HEK293 (cell line): ENCODE measurements at regions of chr6 and their contacts with region 1.

Region 1: GRCh38 chr6:7541175-7542064 is at the start of gene DSP:
- H3K4me3 ChIP-seq: peak within 1 kb of the TSS; percentile 74
- H3K27ac ChIP-seq: peak within 1 kb of the TSS; percentile 96
- H3K4me1 ChIP-seq: peaks cover 42% of the 10 kb centered on the region
- CTCF ChIP-seq: peak; percentile 77

Region 2: DNA sequence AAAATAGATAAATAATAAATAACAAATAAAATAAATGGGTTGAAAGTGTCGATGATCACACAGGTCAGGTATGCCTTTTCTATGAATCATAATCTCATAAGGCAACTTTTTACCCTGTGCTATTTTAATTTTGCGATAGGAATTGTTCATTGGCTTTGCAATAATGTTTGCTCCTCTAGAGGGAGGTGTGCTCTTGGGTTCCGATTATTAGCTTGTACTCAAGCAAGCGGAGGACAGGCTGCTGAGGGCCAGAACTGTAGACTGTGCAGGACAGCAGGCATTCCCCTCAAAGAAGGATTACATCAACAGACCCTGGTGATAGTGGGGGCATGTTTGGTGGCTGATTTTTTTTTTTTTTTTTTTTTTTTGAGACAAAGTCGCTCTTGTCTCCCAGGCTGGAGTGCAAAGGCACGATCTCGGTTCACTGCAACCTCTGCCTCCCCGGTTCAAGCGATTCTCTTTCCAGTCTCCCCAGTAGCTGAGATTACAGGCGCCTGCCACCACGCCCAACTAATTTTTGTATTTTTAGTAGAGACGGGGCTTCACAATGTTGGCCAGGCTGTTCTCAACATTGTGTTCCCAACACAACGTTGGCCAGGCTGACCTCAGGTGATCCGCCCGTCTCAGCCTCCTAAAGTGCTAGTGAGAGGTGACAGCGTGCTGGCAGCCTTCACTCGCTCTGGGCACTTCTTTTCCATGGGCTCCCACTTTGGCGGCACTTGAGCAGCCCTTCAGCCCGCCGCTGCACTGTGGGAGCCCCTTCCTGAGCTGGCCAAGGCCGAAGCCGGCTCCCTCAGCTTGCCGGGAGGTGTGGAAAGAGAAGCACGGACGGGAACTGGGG is 116.2 kb before region 1 on chr6:
- CTCF ChIA-PET with region 1: interaction called, 6 read pairs
- POLR2A ChIA-PET with region 1: interaction called, 13 read pairs
- H3K4me3 ChIP-seq: no peak overlapping the region
- H3K27ac ChIP-seq: no peak overlapping the region
- H3K4me1 ChIP-seq: no peaks in the 10 kb centered on the region
- CTCF ChIP-seq: 0 out of 2 replicates have a peak, but pooled peaks have one; percentile 17

Region 3: DNA sequence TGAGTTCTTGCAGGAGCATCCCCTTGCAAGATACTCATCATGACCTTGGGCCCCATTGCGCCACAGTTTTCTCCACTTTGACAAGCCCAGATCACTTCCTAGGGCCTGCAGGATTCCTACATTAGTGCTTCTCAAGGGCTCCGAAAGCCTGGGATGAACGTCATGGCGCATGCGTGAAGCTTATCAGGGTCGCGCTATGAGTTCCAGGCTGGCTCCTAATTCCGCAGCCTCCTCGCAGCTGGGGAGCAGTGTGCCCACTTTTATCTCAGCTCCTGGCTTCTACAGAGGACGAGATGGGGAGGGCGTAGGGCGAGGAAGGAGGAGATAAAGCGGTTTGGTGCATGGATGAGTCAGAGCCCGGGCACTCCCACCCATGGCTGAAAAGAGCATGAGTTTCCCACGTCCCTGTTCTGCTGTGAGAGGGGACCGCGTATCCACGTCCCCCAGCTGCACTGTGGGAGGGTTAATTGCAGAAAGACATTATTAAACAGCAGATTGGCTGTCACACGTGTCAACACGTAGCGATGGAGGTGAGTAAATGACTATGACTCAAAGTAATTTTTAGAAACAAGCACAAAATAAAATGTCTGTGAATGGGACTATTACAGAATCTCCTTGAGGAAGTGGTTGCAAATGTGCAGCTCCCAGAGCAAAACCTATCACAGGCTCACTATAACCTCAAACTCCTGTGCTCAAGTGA is 72.9 kb before region 1 on chr6:
- CTCF ChIA-PET with region 1: interaction called, 8 read pairs
- POLR2A ChIA-PET with region 1: interaction called, 11 read pairs
- H3K4me3 ChIP-seq: peak overlapping the region; percentile 0; the same call in 1 of the 2 replicates
- H3K27ac ChIP-seq: no peak overlapping the region; the same call in 1 of the 2 replicates
- H3K4me1 ChIP-seq: no peaks in the 10 kb centered on the region; the same call in 1 of the 2 replicates
- CTCF ChIP-seq: no peak

Region 4: DNA sequence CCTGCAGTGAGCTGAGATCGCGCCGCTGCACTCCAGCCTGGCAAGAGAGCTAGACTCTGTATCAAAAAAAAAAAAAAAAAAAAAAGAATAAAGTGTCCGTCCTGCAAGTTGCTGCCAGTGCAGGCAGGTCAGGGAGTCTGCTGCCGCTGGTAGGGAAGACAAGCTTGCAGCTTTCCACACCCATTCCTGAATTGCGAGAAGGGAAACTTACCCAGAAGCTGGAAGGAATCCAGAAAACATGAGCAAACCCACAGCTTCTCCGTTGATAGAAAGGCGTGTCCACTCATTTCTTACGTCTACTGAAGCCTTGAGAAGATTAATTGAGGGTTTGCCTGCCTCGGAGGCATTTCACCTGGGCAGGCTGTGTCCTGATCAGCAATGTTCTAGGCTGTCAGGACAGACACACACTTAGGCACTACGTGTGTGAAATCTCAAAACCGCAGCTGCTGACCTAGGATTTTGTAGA is 61.6 kb before region 1 on chr6:
- CTCF ChIA-PET with region 1: no interaction called
- POLR2A ChIA-PET with region 1: interaction called, 35 read pairs
- H3K4me3 ChIP-seq: no peak overlapping the region
- H3K27ac ChIP-seq: no peak overlapping the region
- H3K4me1 ChIP-seq: no peaks in the 10 kb centered on the region; the same call in 1 of the 2 replicates
- CTCF ChIP-seq: no peak

Region 5: GRCh38 chr6:7505187-7505811 is 36.1 kb before region 1 on chr6:
- CTCF ChIA-PET with region 1: no interaction called
- POLR2A ChIA-PET with region 1: interaction called, 19 read pairs
- H3K4me3 ChIP-seq: no peak overlapping the region
- H3K27ac ChIP-seq: peak overlapping the region; percentile 40
- H3K4me1 ChIP-seq: peaks cover 11% of the 10 kb centered on the region; the same call in 1 of the 2 replicates
- CTCF ChIP-seq: no peak

Region 6: DNA sequence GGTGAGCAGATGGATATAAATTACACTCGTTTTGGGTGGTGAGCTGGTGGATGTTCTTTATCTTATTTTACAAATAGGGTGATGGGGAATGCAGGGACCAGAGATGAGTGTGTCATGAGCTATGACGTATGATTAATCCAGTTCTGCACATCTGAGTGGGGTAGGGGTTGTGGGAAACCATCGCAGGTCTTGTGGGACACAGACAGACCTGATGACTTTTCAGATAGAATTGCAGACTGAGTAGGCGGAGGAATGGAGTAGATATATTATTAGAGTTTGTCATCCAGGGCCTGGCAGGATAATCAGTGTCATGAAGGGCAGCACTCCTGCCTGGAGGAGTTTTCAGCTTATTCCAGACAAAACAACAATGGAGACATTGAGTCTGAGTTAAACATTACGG is 12.9 kb before region 1 on chr6:
- CTCF ChIA-PET with region 1: interaction called, 8 read pairs
- POLR2A ChIA-PET with region 1: interaction called, 12 read pairs
- H3K4me3 ChIP-seq: no peak overlapping the region
- H3K27ac ChIP-seq: no peak overlapping the region
- H3K4me1 ChIP-seq: peaks cover 3% of the 10 kb centered on the region; the same call in 1 of the 2 replicates
- CTCF ChIP-seq: no peak

Region 7: GRCh38 chr6:7589949-7590917 is 48.8 kb after region 1 on chr6 and contains the start of gene SNRNP48:
- CTCF ChIA-PET with region 1: no interaction called
- POLR2A ChIA-PET with region 1: interaction called, 29 read pairs
- H3K4me3 ChIP-seq: peak within 1 kb of the TSS; percentile 93
- H3K27ac ChIP-seq: peak within 1 kb of the TSS; percentile 46; the same call in 1 of the 2 replicates
- H3K4me1 ChIP-seq: peaks cover 11% of the 10 kb centered on the region; the same call in 1 of the 2 replicates
- CTCF ChIP-seq: no peak

Region 8: GRCh38 chr6:7671076-7671475 is 129.7 kb after region 1 on chr6:
- CTCF ChIA-PET with region 1: no interaction called
- POLR2A ChIA-PET with region 1: no interaction called
- H3K4me3 ChIP-seq: no peak overlapping the region
- H3K27ac ChIP-seq: no peak overlapping the region
- H3K4me1 ChIP-seq: no peaks in the 10 kb centered on the region
- CTCF ChIP-seq: no peak